PC-3 (cell line): ENCODE measurements at regions of chr15 and their contacts with region 1.

Region 1: DNA sequence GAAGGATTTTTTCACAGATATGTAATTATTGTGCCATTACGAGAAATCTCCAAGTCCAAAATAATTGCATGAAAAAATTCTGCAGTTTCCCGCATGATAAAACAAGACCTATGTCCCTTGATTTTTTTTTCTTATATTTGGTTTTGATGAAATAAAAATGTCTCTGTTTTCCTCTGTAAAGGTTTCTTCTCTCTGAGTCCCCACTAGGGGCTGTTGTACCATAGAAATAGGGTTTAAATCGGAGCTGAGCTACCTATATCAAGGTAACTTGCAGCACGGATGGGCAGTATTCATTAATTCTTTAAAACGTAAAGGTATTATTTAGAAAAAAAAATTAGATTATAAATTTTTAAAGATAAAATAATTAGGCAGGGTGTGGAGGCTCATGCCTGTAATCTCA is 66.6 kb upstream of the IGF1R start:
- DNase-seq: peak; percentile 33
- ATAC-seq: no peak
- H3K4me3 ChIP-seq: no peak overlapping the region
- H3K27ac ChIP-seq: no peak overlapping the region
- H3K4me1 ChIP-seq: no peaks in the 10 kb centered on the region
- H3K27me3 ChIP-seq: peaks cover 70% of the 10 kb centered on the region
- CTCF ChIP-seq: peak; percentile 38; the same call in 1 of the 2 replicates

Region 2: DNA sequence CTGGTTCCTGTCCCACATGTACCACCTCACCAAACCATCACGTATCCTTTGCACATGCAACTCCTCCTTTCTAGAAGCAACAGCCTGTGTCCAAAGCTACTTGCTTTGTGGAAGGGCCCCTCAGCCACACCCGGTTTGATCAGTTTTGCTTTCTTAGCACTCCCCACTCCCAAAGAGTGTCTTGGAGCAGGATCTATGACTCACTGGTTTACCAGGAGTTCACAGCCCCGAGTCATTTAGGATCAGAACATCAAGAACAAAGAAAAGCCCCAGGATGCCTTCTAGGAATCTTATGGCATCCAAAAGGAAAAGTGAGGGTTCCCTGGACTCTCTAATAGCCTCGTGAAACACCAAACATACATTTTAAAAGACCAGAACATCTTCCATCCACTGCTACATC is 16.0 kb after region 1 on chr15:
- CTCF ChIA-PET with region 1: no interaction called
- POLR2A ChIA-PET with region 1: no interaction called
- intact Hi-C with region 1: no loop called
- DNase-seq: peak; percentile 32
- ATAC-seq: no peak
- H3K4me3 ChIP-seq: no peak overlapping the region
- H3K27ac ChIP-seq: no peak overlapping the region
- H3K4me1 ChIP-seq: no peaks in the 10 kb centered on the region
- H3K27me3 ChIP-seq: peaks cover 57% of the 10 kb centered on the region
- CTCF ChIP-seq: no peak

Region 3: DNA sequence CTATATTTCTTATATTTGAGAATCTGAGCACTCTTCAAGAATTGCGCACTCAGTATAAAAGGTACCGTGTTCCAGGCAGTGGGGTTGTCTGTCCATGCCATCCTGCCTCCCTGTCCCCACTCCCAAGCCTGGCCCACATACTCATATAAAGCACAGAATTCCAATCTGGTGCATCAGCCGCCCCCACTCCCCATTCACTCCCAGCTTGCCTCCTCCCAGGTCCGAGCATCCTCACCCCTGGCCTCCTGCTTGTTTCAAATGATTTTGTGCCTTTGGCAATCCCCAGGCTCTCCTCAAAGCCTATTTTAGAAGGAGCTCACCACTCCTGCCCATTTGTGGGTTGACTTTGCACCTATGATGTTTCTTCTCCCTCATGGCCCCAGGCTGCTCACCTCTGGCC is 44.4 kb after region 1 on chr15:
- CTCF ChIA-PET with region 1: no interaction called
- POLR2A ChIA-PET with region 1: no interaction called
- intact Hi-C with region 1: loop called (anchors 5 kb)
- DNase-seq: no peak
- ATAC-seq: no peak
- H3K4me3 ChIP-seq: no peak overlapping the region
- H3K27ac ChIP-seq: no peak overlapping the region
- H3K4me1 ChIP-seq: no peaks in the 10 kb centered on the region
- H3K27me3 ChIP-seq: peaks cover 94% of the 10 kb centered on the region
- CTCF ChIP-seq: no peak